ENCODE measurements at regions of chrX and their contacts with region 1.

Region 1: GRCh38 chrX:154534862-154535670 is 11.6 kb downstream of the G6PD start:
- DNase-seq: peak; percentile 33
- H3K4me3 ChIP-seq: no peak overlapping the region
- H3K27ac ChIP-seq: peak overlapping the region in 1 of 4 donors; percentile 44
- H3K4me1 ChIP-seq: peaks cover 0 to 11% (median 4%) of the 10 kb centered on the region in 3 donors
- H3K27me3 ChIP-seq: no peaks in the 10 kb centered on the region
- CTCF ChIP-seq: peak; percentile 95 to 100 (median 98)
- POLR2A ChIP-seq: no peak

Region 2: GRCh38 chrX:154136627-154137161 is 398.4 kb before region 1 on chrX:
- intact Hi-C with region 1: no loop called
- DNase-seq: no peak
- H3K4me3 ChIP-seq: peak overlapping the region; percentile 6 to 61 (median 33)
- H3K27ac ChIP-seq: peak overlapping the region in 1 of 4 donors; percentile 44
- H3K4me1 ChIP-seq: peaks cover 0 to 9% (median 0%) of the 10 kb centered on the region in 3 donors
- H3K27me3 ChIP-seq: no peaks in the 10 kb centered on the region
- CTCF ChIP-seq: peak; percentile 50 to 74 (median 56)
- POLR2A ChIP-seq: peak in 1 of 4 donors; percentile 9

Region 3: GRCh38 chrX:154401045-154401799 is 133.8 kb before region 1 on chrX:
- intact Hi-C with region 1: loop called (anchors 5 kb)
- DNase-seq: no peak
- H3K4me3 ChIP-seq: no peak overlapping the region
- H3K27ac ChIP-seq: peak overlapping the region in 2 of 4 donors; percentile 50 to 66
- H3K4me1 ChIP-seq: peaks cover 10 to 55% (median 15%) of the 10 kb centered on the region in 3 donors
- H3K27me3 ChIP-seq: no peaks in the 10 kb centered on the region
- CTCF ChIP-seq: no peak
- POLR2A ChIP-seq: no peak